Psoas muscle (tissue), 8 donors: ENCODE measurements at regions of chr5 and their contacts with region 1.

Region 1: DNA sequence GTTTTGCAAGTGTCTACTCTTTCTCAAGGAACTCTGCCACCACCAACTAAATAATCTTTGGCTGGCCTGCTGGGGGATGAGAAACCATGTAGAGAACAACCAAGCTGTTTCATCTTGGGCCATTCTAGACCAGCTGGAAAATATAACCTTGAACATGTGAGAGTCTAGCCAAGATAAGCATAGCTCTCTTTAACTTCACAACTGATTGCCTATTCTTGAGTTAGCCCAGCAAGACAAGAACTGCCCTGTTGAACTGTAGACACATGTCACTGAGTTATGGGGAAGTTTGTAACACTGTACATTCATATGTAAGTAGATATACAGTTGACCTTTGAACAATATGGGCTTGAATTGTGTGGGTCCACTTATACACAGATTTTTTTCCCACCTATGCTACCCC is 44.4 kb downstream of the NUP155 start:
- DNase-seq: no peak
- ATAC-seq: no peak
- H3K4me3 ChIP-seq: no peak overlapping the region
- H3K27ac ChIP-seq: no peak overlapping the region
- H3K4me1 ChIP-seq: no peaks in the 10 kb centered on the region
- H3K27me3 ChIP-seq: no peaks in the 10 kb centered on the region
- CTCF ChIP-seq: no peak

Region 2: DNA sequence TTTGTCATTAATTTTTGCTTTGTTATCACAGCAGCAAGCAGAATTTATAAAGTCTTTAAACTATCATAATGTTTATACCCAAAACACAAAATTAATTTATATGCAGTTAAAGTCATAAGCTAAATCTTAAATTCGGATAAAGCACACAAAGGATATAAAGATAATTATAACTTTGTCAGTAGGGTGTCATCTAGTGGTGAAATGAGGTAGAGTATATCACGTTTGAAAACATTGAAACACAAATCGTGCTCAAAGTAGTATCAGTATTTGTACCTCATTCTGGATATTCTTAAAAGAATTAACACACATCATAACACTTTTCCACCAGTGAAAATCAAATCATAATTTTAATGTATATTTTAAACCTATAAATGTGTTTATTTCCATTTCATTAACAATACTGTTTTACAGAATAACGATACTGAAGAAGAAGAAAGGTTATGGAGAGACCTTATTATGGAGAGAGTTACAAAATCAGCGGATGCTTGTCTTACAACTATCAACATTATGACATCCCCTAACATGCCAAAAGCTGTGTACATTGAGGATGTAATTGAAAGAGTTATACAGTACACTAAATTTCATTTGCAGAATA is 320.5 kb before region 1 on chr5:
- intact Hi-C with region 1: no loop called
- DNase-seq: no peak
- ATAC-seq: peak in 2 of 4 donors; percentile 44 to 67
- H3K4me3 ChIP-seq: no peak overlapping the region
- H3K27ac ChIP-seq: no peak overlapping the region
- H3K4me1 ChIP-seq: no peaks in the 10 kb centered on the region
- H3K27me3 ChIP-seq: no peaks in the 10 kb centered on the region
- CTCF ChIP-seq: peak; percentile 69

Region 3: GRCh38 chr5:37214550-37214949 is 112.0 kb before region 1 on chr5:
- intact Hi-C with region 1: loop called in 1 of 2 experiments (anchors 10 kb)
- DNase-seq: no peak
- ATAC-seq: no peak
- H3K4me3 ChIP-seq: no peak overlapping the region
- H3K27ac ChIP-seq: no peak overlapping the region
- H3K4me1 ChIP-seq: no peaks in the 10 kb centered on the region
- H3K27me3 ChIP-seq: no peaks in the 10 kb centered on the region
- CTCF ChIP-seq: no peak